Breast epithelium (tissue), 4 donors: ENCODE measurements at regions of chr5 and their contacts with region 1.

Region 1: GRCh38 chr5:148826053-148826738 is at the start of gene ADRB2:
- DNase-seq: peak; percentile 94 to 96
- H3K4me3 ChIP-seq: peak within 1 kb of the TSS; percentile 56 to 81 (median 57)
- H3K27ac ChIP-seq: peak within 1 kb of the TSS; percentile 90 to 95
- H3K4me1 ChIP-seq: no peaks in the 10 kb centered on the region
- H3K27me3 ChIP-seq: no peaks in the 10 kb centered on the region
- CTCF ChIP-seq: no peak
- POLR2A ChIP-seq: peak; percentile 20
- total RNA-seq, gene ADRB2: 9.5 to 41.3 (median 26.4) TPM

Region 2: DNA sequence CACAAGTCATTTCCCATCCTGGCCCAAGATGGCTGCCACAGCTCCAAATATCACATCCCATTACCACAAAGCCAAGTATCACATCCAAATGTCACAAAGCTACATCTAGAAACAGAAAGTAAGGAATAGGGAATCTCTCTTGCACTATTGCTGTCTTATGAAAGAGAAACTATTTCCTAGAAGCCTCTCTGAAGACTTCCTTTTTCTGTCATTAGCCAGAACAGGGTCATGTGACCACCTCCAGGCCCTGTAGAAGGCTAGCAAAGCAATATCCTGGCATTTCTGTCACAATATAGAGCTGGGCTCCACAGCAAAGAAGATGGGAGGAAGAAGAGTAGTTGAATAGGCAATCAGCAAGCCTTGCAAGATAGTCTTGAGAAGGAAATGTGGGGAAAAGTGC is 137.5 kb after region 1 on chr5:
- intact Hi-C with region 1: loop called (anchors 10 kb)
- DNase-seq: no peak
- H3K4me3 ChIP-seq: no peak overlapping the region
- H3K27ac ChIP-seq: peak overlapping the region; percentile 23 to 34
- H3K4me1 ChIP-seq: peaks cover 0 to 14% of the 10 kb centered on the region in 2 donors
- H3K27me3 ChIP-seq: no peaks in the 10 kb centered on the region
- CTCF ChIP-seq: no peak
- POLR2A ChIP-seq: no peak